ENCODE measurements at regions of chr17 and their contacts with region 1.

Region 1: GRCh38 chr17:74659898-74660297 is 36.4 kb upstream of the CD300E start:
- DNase-seq: no peak
- H3K4me3 Mint-ChIP-seq: no peak overlapping the region
- H3K27ac Mint-ChIP-seq: no peak overlapping the region
- H3K4me1 Mint-ChIP-seq: peaks cover 3% of the 10 kb centered on the region
- H3K27me3 Mint-ChIP-seq: peaks cover 46% of the 10 kb centered on the region

Region 2: GRCh38 chr17:74671031-74671771 is 11.3 kb after region 1 on chr17:
- intact Hi-C with region 1: no loop called
- DNase-seq: peak; percentile 73
- H3K4me3 Mint-ChIP-seq: no peak overlapping the region
- H3K27ac Mint-ChIP-seq: no peak overlapping the region
- H3K4me1 Mint-ChIP-seq: no peaks in the 10 kb centered on the region
- H3K27me3 Mint-ChIP-seq: peaks cover 55% of the 10 kb centered on the region

Region 3: GRCh38 chr17:74690409-74690825 is 30.5 kb after region 1 on chr17:
- intact Hi-C with region 1: no loop called
- DNase-seq: no peak
- H3K4me3 Mint-ChIP-seq: no peak overlapping the region
- H3K27ac Mint-ChIP-seq: no peak overlapping the region
- H3K4me1 Mint-ChIP-seq: peaks cover 18% of the 10 kb centered on the region
- H3K27me3 Mint-ChIP-seq: peaks cover 15% of the 10 kb centered on the region

Region 4: GRCh38 chr17:74736513-74737298 is 76.8 kb after region 1 on chr17 and contains the start of gene RAB37:
- intact Hi-C with region 1: loop called (anchors 1 kb)
- DNase-seq: peak; percentile 35
- H3K4me3 Mint-ChIP-seq: peak within 1 kb of the TSS; percentile 84
- H3K27ac Mint-ChIP-seq: peak within 1 kb of the TSS; percentile 87
- H3K4me1 Mint-ChIP-seq: peaks cover 41% of the 10 kb centered on the region
- H3K27me3 Mint-ChIP-seq: peaks cover 9% of the 10 kb centered on the region
- total RNA-seq, gene RAB37: 9.7 and 12.1 TPM in 2 replicates

Region 5: DNA sequence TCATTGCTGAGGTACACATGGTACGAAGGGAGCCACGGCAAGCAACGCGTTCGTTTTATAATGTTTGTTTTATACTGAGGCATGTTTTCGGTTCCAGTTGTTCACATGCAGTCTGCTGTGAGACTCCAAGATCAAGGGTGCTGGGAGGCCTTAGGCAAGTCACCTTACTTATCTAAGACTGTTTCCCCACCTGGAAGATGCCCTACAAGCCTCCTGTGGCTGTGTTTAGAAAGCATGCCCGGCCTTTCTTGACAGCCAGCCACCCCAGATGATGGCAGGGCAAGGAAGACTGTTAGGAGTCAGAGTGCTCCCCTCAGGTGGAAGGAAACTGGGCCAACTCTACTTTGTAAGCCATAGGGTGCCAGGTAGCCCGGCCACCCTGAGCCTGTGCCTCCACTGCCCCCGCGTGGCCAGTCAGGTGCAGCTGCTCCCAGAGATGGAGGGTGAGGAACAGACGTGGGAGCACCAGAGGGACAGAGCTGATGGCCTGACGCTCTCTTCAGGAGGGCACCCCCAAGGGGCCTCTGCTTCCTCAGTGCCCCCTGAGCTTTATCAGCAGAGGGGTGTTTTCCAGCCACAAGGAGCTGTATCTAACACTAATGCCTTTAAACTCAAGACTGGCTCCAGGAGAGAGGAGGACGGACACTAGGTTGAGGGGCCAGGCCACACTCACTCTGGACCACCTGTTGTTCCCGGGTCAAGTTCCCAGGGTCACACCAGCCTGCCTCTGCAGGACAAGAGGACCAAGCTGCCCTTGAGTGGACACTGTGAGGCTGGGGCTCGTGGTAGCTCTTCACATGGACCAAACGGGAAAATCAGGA is 110.8 kb after region 1 on chr17:
- intact Hi-C with region 1: loop called (anchors 1 kb)
- DNase-seq: peak; percentile 60
- H3K4me3 Mint-ChIP-seq: no peak overlapping the region
- H3K27ac Mint-ChIP-seq: peak overlapping the region; percentile 43
- H3K4me1 Mint-ChIP-seq: peaks cover 19% of the 10 kb centered on the region
- H3K27me3 Mint-ChIP-seq: no peaks in the 10 kb centered on the region

Region 6: DNA sequence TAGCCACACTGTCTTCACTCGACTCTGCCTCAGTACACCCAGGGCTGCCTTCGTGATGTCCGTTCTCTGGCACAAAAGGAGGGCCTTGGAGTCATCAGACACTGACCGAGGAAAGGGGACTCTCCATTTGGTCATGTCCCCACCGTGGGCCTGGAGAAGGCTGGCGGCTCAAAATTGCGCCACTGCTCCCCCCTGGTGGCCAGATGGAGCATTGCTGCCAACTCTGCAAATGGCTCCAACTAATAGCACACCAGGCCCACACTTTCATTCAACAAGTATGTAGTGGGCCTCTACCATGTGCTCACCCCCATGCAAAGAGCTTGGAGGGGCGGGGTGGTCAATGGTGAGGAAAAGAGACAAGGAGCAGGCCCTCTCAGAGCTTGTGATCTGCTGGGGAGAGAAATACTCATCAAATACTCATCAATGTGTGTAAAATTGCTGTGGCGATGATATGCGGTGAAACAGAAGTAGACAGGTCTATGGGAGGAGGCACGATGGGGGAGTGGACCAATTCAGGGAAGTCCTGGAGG is 205.0 kb after region 1 on chr17:
- intact Hi-C with region 1: loop called (anchors 2 kb)
- DNase-seq: peak; percentile 61
- H3K4me3 Mint-ChIP-seq: no peak overlapping the region
- H3K27ac Mint-ChIP-seq: no peak overlapping the region
- H3K4me1 Mint-ChIP-seq: peaks cover 3% of the 10 kb centered on the region
- H3K27me3 Mint-ChIP-seq: peaks cover 11% of the 10 kb centered on the region